ENCODE measurements at regions of chr1 and their contacts with region 1.

Region 1: DNA sequence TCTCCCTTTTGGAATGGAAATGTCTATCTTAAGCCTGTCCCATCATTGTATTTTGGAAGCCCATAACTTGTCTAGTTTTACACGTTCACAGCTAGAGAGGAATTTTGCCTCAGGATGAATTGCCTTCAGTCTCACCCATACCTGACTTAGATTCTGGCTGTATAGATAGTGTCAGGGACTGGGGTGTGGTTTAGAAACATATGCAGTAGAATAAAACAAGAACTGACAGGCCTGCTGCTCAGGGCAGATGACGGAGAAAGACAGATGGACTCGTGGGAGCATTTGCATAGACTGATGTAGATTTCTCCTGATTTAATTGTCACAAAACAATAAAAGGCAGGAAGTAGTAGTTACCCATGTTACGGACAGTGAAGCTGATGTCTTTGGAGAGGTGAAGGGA is 166.7 kb downstream of the UCK2 start:
- DNase-seq: no peak
- ATAC-seq: no peak
- H3K4me3 ChIP-seq: no peak overlapping the region
- H3K27ac ChIP-seq: no peak overlapping the region
- H3K4me1 ChIP-seq: no peaks in the 10 kb centered on the region
- H3K27me3 ChIP-seq: no peaks in the 10 kb centered on the region
- CTCF ChIP-seq: no peak

Region 2: DNA sequence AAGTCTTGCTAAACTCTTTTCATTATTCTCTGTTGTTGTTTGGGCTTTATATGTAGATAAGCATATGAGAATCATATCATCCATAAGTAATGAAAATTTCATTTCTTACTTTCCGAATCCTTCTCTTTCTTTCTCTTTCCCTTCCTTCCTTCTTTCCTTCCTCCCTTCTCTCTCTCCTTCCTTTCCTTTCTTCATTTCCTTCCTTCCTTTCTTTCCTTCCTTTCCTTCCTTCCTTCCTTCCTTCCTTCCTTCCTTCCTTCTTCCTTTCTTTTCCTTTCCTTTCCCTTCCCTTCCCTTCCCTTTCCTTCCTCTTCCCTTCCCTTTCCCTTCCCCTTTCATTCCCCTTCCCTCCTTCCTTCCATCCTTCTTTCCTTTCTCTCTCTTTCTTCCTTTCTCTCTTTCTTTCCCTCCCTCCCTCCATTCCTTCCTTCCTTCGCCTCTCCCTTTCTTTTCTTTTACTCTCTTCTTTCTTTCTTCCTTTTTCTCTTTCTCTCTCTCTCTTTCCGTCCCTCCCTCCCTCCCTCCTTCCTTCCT is 19.4 kb before region 1 on chr1:
- intact Hi-C with region 1: no loop called
- DNase-seq: no peak
- ATAC-seq: no peak
- H3K4me3 ChIP-seq: no peak overlapping the region
- H3K27ac ChIP-seq: no peak overlapping the region
- H3K4me1 ChIP-seq: no peaks in the 10 kb centered on the region
- H3K27me3 ChIP-seq: peaks cover 0 to 1% (median 0%) of the 10 kb centered on the region in 3 donors
- CTCF ChIP-seq: no peak

Region 3: DNA sequence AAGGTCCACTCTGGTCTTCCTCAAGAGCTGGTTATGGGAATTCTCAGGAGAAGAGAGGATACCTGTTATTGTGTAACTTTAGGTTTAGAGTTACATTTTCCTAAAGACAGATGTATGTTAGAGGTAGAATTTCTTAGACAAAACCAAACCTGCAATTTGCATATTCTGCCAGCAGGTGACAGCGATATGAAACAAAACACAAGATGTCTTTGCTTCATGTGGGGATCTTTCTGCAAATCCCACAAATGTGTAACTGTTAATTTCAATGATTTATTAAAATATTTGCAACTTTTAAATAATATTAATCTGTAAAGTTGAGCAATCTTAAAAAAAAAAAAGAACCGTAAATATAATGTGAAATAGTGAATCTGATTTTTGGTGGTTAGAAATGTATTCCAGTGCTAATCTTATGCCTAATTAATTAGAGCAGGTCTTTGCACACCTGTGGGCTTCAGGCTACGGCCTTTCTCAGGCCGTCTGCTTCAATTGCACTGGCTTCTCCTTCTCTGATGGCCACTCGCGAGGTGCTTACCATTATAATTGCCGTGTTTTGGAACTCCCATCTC is 139.3 kb after region 1 on chr1:
- intact Hi-C with region 1: no loop called
- DNase-seq: no peak
- ATAC-seq: no peak
- H3K4me3 ChIP-seq: no peak overlapping the region
- H3K27ac ChIP-seq: no peak overlapping the region
- H3K4me1 ChIP-seq: no peaks in the 10 kb centered on the region
- H3K27me3 ChIP-seq: no peaks in the 10 kb centered on the region
- CTCF ChIP-seq: peak; percentile 22

Region 4: GRCh38 chr1:166605137-166605536 is 611.0 kb after region 1 on chr1:
- intact Hi-C with region 1: loop called in 1 of 2 experiments (anchors 5 kb)
- DNase-seq: no peak
- ATAC-seq: no peak
- H3K4me3 ChIP-seq: no peak overlapping the region
- H3K27ac ChIP-seq: no peak overlapping the region
- H3K4me1 ChIP-seq: no peaks in the 10 kb centered on the region
- H3K27me3 ChIP-seq: no peaks in the 10 kb centered on the region
- CTCF ChIP-seq: no peak

Measured in psoas muscle (tissue), 8 donors.